Activated B cell treated with CpG ODN at 0.5 μM for 24 hours (primary cell): ENCODE measurements at regions of chr9 and their contacts with region 1.

Region 1: DNA sequence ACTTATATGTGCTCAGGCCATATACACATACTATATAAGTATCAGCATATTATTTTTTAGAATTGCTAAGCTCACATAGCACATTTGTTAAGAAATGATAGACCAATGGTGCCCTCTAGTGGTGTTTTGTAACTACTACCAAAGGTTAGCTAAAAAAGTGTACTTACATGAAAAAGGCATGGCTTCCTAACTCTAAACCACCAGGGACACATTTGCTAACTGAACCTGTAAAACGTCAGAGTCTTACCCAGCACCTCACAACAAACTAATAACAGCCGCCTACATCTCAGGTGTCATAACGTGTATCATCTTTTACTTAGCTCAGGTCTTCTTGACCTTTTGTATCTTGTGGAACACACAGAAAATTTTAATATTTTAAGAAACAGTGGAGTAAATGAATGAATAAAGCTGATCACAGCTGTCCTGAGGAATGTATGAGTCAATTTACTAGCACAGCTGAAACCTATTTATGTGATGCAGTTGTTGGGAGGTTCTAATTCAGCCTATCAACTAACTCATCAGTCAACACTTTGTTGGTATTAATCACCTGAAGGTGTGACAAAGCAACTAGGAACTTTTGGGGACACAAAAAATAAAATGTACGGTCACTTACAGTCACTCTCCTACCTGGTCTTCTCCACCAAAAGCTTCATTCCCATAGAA is 72.9 kb downstream of the BAAT start:
- DNase-seq: no peak
- ATAC-seq: peak; percentile 45
- H3K4me3 Mint-ChIP-seq: no peak overlapping the region
- H3K27ac Mint-ChIP-seq: no peak overlapping the region
- H3K4me1 Mint-ChIP-seq: no peaks in the 10 kb centered on the region
- H3K27me3 Mint-ChIP-seq: peaks cover 6% of the 10 kb centered on the region
- CTCF ChIP-seq: peak; percentile 56

Region 2: DNA sequence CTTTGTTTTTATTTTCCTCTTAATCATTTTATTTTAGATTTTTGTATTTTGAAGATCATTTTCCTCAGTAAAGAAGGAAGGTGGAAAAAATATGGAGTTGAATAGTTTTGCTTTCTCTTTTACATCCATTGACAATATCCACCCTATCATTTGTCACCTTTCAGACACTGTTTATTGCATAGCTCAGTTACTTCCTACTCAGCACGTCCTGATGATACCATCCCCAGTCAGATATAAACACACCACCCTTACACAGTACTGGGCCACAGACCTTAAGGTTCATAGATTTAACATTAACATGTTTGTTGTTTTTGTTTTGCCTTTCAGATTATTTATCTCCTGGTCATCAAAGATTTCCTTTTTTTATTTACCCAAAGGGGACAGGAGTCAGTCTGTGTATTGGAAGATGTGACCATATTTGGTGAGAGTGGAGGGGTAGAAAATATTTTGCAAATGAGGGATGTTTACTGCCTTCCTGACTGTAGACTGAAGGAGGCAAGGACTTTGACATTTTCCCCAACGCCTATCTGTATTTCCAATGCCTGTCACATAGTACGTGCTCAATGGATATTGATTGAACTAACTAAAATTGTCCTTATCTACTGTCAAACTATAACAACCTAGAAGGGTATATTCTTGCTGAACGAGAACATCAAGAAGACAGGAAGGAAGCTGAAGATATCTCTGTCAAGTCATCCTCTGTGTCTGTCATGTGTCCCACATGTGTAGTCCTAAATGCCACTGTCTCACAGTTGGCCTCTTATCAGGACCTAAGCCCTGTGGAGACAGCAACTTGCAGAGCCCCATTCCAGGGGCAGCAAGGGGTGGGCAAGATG is 1389.8 kb before region 1 on chr9:
- CTCF ChIA-PET with region 1: no interaction called
- POLR2A ChIA-PET with region 1: no interaction called
- intact Hi-C with region 1: loop called (anchors 10 kb)
- DNase-seq: no peak
- ATAC-seq: no peak
- H3K4me3 Mint-ChIP-seq: no peak overlapping the region
- H3K27ac Mint-ChIP-seq: no peak overlapping the region
- H3K4me1 Mint-ChIP-seq: no peaks in the 10 kb centered on the region
- H3K27me3 Mint-ChIP-seq: no peaks in the 10 kb centered on the region
- CTCF ChIP-seq: no peak

Region 3: DNA sequence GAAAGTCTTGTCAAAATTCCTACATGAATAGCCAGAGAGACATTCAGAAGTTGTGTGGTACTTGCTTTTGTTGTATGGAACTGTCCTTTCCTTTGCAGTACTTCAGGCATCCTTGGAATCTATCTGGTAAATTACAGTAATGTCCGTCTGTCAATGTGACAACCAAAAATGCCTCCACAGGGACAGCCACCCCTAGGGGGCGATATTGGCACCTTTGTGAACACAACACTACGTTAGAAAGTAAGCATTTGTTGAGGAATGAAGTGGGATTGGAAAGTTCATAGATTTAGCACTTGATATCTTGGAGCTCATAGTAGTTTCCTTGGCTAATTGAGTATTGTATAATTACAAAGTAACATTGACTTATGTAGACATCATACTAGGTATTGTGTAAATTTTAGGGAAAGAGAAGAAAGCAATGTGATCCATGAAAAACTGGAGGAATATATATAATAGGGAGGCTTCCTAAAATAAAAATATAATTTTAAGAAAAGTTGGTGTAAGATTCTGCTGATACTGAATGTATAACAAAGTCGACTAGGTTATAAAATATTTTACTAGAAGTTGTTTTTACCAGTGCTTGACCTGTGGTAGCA is 806.2 kb before region 1 on chr9:
- CTCF ChIA-PET with region 1: interaction called, 3 read pairs
- POLR2A ChIA-PET with region 1: no interaction called
- intact Hi-C with region 1: loop called (anchors 2 kb)
- DNase-seq: peak; percentile 26
- ATAC-seq: no peak
- H3K4me3 Mint-ChIP-seq: no peak overlapping the region
- H3K27ac Mint-ChIP-seq: no peak overlapping the region
- H3K4me1 Mint-ChIP-seq: no peaks in the 10 kb centered on the region
- H3K27me3 Mint-ChIP-seq: peaks cover 2% of the 10 kb centered on the region
- CTCF ChIP-seq: no peak

Region 4: GRCh38 chr9:100700689-100701318 is 611.1 kb before region 1 on chr9:
- CTCF ChIA-PET with region 1: interaction called, 4 read pairs
- POLR2A ChIA-PET with region 1: no interaction called
- intact Hi-C with region 1: loop called (anchors 1 kb)
- DNase-seq: no peak
- ATAC-seq: no peak
- H3K4me3 Mint-ChIP-seq: no peak overlapping the region
- H3K27ac Mint-ChIP-seq: no peak overlapping the region
- H3K4me1 Mint-ChIP-seq: no peaks in the 10 kb centered on the region
- H3K27me3 Mint-ChIP-seq: no peaks in the 10 kb centered on the region
- CTCF ChIP-seq: no peak

Region 5: DNA sequence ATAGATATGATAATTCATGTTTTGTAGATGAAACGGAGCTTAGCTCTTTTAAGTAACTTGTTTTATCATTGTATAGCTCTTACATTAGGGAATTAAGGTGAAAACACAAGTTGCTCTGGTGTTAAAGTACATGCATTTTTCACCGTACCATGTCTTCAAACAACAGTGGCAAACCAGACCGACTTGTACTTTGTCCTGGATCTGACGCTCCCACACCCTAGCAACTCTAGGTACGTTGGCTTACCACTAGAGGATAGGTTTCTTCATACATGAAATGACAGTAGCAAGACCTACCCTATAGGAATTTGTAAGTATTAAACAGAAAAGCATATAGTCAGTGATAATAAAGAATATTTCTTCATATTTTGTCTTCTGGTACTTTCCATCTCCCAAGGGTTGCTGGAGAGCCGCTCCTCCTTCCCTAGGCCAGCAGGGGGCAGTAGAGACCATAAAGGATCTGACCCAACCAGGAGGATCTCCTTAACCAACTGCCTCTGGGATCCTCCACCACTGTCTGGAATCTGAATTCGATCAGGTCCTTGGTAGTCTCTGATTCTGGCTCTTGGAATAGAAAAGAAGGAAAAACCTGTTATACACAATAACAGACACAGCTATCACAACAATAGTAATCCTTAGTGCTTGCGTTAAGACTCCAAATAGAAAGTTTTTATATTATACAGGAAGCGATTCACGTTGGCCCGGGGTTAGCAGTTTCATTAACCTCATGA is 597.4 kb before region 1 on chr9:
- CTCF ChIA-PET with region 1: interaction called, 11 read pairs
- POLR2A ChIA-PET with region 1: no interaction called
- intact Hi-C with region 1: no loop called
- DNase-seq: no peak
- ATAC-seq: no peak
- H3K4me3 Mint-ChIP-seq: no peak overlapping the region
- H3K27ac Mint-ChIP-seq: no peak overlapping the region
- H3K4me1 Mint-ChIP-seq: no peaks in the 10 kb centered on the region
- H3K27me3 Mint-ChIP-seq: no peaks in the 10 kb centered on the region
- CTCF ChIP-seq: no peak

Region 6: DNA sequence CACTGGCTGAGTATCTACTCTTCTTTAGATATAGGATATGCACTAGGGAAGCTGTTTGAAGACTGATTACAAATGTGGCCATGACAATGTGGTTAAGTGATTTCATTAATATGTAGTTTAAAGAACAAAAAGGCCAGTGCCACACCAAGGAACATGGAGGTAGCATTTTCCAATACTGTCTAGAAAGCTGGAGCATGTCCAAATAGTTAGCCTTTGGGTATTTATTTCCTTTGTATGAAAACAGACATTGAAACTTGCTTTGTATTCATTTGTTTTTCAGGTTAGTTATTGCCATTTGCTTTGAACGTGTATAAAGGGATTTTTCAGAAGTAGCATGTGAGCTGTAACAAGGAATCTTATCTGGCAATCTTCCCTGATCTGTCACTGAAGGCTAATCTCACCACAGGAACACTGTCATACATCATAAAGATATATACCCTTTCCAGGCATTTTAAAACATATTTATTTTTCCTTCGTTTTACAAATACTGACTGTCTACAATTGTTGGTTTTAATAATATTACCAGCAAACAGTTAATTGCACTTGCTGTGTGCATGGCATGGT is 190.0 kb before region 1 on chr9:
- CTCF ChIA-PET with region 1: interaction called, 3 read pairs
- POLR2A ChIA-PET with region 1: no interaction called
- intact Hi-C with region 1: loop called (anchors 5 kb)
- DNase-seq: no peak
- ATAC-seq: no peak
- H3K4me3 Mint-ChIP-seq: no peak overlapping the region
- H3K27ac Mint-ChIP-seq: no peak overlapping the region
- H3K4me1 Mint-ChIP-seq: no peaks in the 10 kb centered on the region
- H3K27me3 Mint-ChIP-seq: no peaks in the 10 kb centered on the region
- CTCF ChIP-seq: no peak

Region 7: GRCh38 chr9:101148344-101148743 is 163.5 kb before region 1 on chr9:
- CTCF ChIA-PET with region 1: no interaction called
- POLR2A ChIA-PET with region 1: no interaction called
- intact Hi-C with region 1: no loop called
- DNase-seq: no peak
- ATAC-seq: no peak
- H3K4me3 Mint-ChIP-seq: no peak overlapping the region
- H3K27ac Mint-ChIP-seq: no peak overlapping the region
- H3K4me1 Mint-ChIP-seq: no peaks in the 10 kb centered on the region
- H3K27me3 Mint-ChIP-seq: no peaks in the 10 kb centered on the region
- CTCF ChIP-seq: no peak

Region 8: GRCh38 chr9:101409079-101409477 is 97.2 kb after region 1 on chr9:
- CTCF ChIA-PET with region 1: no interaction called
- POLR2A ChIA-PET with region 1: no interaction called
- intact Hi-C with region 1: no loop called
- DNase-seq: no peak
- ATAC-seq: no peak
- H3K4me3 Mint-ChIP-seq: no peak overlapping the region
- H3K27ac Mint-ChIP-seq: no peak overlapping the region
- H3K4me1 Mint-ChIP-seq: no peaks in the 10 kb centered on the region
- H3K27me3 Mint-ChIP-seq: no peaks in the 10 kb centered on the region
- CTCF ChIP-seq: no peak